GM10248 (cell line): ENCODE measurements at regions of chr14 and their contacts with region 1.

Region 1: DNA sequence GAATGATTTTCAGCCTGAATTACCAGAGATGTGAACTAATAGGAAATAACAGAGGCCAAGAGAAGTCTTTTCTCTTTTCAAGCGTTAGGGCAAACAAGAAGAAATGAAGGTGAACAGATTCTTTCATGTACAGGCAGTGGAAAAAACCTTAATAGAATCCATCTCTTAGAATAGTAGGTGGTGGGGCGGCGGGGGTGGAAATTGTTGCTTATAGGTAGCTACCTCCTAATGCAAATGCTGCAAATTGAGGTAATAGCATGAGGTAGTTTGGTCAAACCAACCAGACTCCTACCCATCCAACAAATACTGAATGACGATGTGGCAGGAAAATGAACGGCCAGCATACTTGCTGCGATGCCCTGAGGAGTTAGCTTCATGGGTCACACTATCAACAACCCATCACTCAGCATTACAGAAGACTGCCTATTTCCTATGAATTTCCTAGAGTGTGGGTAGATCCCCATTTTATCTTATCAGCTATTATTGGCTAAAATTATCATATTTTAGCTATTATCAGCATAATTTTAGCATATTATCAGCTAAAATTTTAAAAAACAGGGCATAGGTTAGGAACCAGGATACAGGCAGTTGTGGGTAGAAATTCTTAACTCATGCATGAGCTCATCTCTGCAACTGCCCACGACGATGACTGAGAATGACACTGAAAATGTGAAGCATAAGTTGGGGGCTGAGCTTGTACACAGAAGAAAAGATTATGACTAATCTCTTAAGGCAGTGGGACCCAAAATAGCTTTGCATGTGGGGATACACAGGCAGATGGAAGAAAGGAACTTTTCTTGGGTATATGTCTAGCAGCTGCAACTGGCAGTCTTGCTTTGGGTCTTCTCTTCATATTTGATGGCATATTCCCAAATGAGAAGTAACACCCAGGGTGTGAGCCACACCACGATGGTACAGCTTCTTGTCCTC is 68.7 kb downstream of the NIN start:
- DNase-seq: peak; percentile 69
- CTCF ChIP-seq: no peak

Region 2: GRCh38 chr14:50647282-50647681 is 115.0 kb before region 1 on chr14:
- CTCF ChIA-PET with region 1: no interaction called
- POLR2A ChIA-PET with region 1: no interaction called
- DNase-seq: peak; percentile 50
- CTCF ChIP-seq: no peak

Region 3: GRCh38 chr14:50736932-50737419 is 25.3 kb before region 1 on chr14:
- CTCF ChIA-PET with region 1: interaction called, 18 read pairs
- POLR2A ChIA-PET with region 1: interaction called, 16 read pairs
- DNase-seq: peak; percentile 70
- CTCF ChIP-seq: no peak

Region 4: GRCh38 chr14:50920482-50921230 is 158.4 kb after region 1 on chr14:
- CTCF ChIA-PET with region 1: no interaction called
- POLR2A ChIA-PET with region 1: no interaction called
- DNase-seq: no peak
- CTCF ChIP-seq: no peak